ENCODE measurements at regions of chr7 and their contacts with region 1.

Region 1: DNA sequence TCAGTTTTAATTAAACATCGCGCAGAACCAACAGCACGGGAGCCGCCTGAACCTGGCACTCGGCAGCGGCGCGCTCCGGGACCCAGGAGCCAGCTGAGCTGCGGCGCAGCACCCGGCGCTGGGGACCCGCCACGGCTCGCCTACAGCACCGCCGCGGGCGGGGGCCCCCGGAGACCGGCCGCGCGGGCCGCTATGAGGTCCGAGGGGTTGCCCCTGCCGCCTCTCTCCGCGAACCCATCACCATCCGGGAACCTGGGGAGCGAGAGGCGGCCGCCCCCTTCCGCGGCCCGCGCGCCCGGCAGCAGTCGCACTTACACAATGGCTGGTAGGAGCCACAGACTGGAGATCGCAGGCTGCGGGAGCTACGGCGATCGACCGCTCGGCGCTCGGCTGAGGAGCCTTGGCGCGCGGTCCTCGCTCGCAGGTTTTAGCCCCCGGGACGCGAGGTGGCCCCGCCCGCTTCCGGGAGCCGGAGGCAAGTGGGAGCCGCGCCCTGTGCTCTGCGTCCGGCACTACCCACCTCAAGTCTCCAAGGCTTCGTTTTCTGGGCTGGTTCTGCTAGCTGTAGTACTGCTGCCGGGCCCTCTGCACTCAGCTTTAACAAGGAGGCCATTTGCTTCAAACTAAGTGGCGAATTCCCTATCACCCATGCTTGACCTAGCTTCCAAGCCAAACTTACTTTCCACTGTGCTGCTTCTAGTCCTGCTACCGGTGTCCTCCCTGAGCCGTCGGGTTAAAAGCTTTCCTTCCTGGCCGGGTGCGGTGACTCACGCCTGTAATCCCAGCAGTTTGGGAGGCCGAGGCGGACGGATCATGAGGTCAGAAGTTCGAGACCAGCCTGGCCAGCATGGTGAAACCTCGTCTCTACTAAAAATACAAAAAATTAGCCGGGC is at the start of gene TPK1:
- DNase-seq: peak; percentile 81 to 97 (median 90)
- ATAC-seq: peak; percentile 84
- H3K4me3 ChIP-seq: peak within 1 kb of the TSS; percentile 85
- H3K4me3 Mint-ChIP-seq: peak within 1 kb of the TSS; percentile 97
- H3K27ac ChIP-seq: peak within 1 kb of the TSS; percentile 87 to 88
- H3K27ac Mint-ChIP-seq: peak within 1 kb of the TSS; percentile 97
- H3K4me1 ChIP-seq: peaks cover 35% of the 10 kb centered on the region
- H3K4me1 Mint-ChIP-seq: peaks cover 45% of the 10 kb centered on the region
- H3K27me3 ChIP-seq: no peaks in the 10 kb centered on the region
- H3K27me3 Mint-ChIP-seq: no peaks in the 10 kb centered on the region
- CTCF ChIP-seq: no peak
- total RNA-seq, gene TPK1: 17.1 to 17.8 TPM

Region 2: DNA sequence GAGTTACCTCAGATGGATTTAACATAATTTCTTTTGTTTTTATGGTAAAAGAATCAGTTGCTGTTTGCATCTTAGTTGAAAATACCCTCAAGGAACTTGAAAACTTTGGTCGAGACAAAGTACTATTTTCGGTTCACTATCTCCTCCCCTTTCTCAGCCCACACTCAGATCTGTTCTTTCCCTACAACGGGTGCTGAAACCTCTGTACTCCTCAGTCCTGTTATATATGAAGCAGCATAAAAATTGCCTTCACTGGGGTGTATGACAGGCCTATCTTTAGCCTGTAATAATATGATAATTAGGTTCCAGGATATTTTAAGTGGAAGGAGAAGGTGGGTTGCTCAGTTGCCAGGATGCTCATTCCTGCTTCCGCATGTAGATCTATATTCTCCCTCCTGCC is 327.2 kb before region 1 on chr7:
- CTCF ChIA-PET with region 1: no interaction called
- POLR2A ChIA-PET with region 1: no interaction called
- intact Hi-C with region 1: no loop called
- DNase-seq: no peak
- ATAC-seq: no peak
- H3K4me3 ChIP-seq: no peak overlapping the region
- H3K4me3 Mint-ChIP-seq: no peak overlapping the region
- H3K27ac ChIP-seq: no peak overlapping the region
- H3K27ac Mint-ChIP-seq: no peak overlapping the region
- H3K4me1 ChIP-seq: no peaks in the 10 kb centered on the region
- H3K4me1 Mint-ChIP-seq: no peaks in the 10 kb centered on the region
- H3K27me3 ChIP-seq: no peaks in the 10 kb centered on the region
- H3K27me3 Mint-ChIP-seq: no peaks in the 10 kb centered on the region
- CTCF ChIP-seq: no peak

Region 3: DNA sequence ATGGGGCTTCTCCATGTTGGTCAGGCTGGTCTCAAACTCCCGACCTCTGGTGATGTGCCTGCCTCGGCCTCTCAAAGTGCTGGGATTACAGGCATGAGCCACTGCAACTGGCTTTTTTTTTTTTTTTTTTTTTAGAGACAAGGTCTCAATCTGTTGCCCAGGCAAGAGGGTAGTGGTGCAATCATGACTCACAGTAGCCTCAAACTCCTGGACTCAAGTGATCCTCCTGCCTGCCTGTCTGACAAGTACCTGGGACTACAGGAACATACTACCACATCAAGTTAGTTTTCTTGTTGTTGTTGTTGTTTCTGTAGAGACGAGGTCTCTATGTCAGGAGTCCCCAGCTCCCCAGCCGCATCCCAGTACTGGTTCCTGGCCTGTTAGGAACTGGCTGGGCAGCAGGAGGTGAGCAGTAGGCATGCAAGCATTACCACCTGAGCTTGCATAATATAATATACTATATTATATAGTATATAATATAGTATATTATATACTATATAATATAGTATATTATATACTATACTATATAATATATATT is 55.8 kb before region 1 on chr7:
- CTCF ChIA-PET with region 1: no interaction called
- POLR2A ChIA-PET with region 1: interaction called, 54 read pairs
- intact Hi-C with region 1: no loop called
- DNase-seq: no peak
- ATAC-seq: no peak
- H3K4me3 ChIP-seq: no peak overlapping the region
- H3K4me3 Mint-ChIP-seq: no peak overlapping the region
- H3K27ac ChIP-seq: no peak overlapping the region
- H3K27ac Mint-ChIP-seq: no peak overlapping the region
- H3K4me1 ChIP-seq: no peaks in the 10 kb centered on the region
- H3K4me1 Mint-ChIP-seq: peaks cover 39% of the 10 kb centered on the region
- H3K27me3 ChIP-seq: no peaks in the 10 kb centered on the region
- H3K27me3 Mint-ChIP-seq: no peaks in the 10 kb centered on the region
- CTCF ChIP-seq: no peak

Region 4: GRCh38 chr7:144796919-144797318 is 39.0 kb before region 1 on chr7:
- CTCF ChIA-PET with region 1: interaction called, 3 read pairs
- POLR2A ChIA-PET with region 1: interaction called, 16 read pairs
- intact Hi-C with region 1: no loop called
- DNase-seq: no peak
- ATAC-seq: no peak
- H3K4me3 ChIP-seq: no peak overlapping the region
- H3K4me3 Mint-ChIP-seq: no peak overlapping the region
- H3K27ac ChIP-seq: no peak overlapping the region
- H3K27ac Mint-ChIP-seq: no peak overlapping the region
- H3K4me1 ChIP-seq: no peaks in the 10 kb centered on the region
- H3K4me1 Mint-ChIP-seq: peaks cover 46% of the 10 kb centered on the region
- H3K27me3 ChIP-seq: no peaks in the 10 kb centered on the region
- H3K27me3 Mint-ChIP-seq: no peaks in the 10 kb centered on the region
- CTCF ChIP-seq: no peak

Region 5: DNA sequence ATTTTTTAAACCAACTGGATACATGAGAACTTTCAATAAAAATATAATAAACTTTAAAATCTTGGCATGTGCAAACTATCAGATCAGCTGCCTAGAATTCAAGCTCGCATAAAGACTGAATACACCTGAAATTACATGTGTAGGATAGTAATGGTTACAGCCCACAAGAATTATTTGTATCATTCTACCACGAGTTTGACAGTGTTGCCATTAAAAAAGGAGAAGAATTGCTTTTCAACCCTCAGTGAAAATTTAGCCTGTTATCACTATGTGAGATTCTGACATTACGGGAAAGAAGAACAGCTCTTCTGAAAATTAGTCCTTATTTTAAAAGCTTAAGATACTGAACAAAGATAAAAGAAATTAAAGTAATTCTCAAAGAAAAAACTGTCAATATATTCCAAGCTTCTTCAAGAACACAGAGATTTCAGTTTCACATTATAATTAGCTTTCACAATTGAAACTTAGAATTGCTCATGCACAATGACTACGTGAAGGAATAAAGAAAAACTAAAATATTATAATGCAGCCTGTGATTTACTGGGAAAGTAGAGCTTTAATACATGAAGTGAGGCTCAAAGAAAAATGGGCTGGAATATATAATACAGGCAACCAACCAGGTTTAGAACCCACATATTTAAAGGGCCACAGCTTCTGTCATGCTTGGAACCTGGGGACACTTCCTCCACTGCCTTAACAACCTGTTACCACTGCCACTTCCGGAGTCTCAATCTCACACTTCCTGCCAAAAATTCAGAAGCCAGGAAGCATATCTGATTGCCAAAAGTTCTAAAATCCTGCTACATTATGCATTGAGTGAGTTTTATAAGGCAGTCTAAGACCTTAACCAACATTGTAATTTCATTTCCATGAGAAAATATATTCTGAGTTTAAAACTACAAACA is 23.3 kb before region 1 on chr7:
- CTCF ChIA-PET with region 1: interaction called, 5 read pairs
- POLR2A ChIA-PET with region 1: interaction called, 302 read pairs
- intact Hi-C with region 1: loop called (anchors 1 to 5 kb)
- DNase-seq: peak in 12 of 14 experiments; percentile 14 to 87 (median 40)
- ATAC-seq: peak; percentile 98
- H3K4me3 ChIP-seq: peak overlapping the region; percentile 21
- H3K4me3 Mint-ChIP-seq: peak overlapping the region; percentile 84
- H3K27ac ChIP-seq: peak overlapping the region; percentile 54 to 72
- H3K27ac Mint-ChIP-seq: peak overlapping the region; percentile 88
- H3K4me1 ChIP-seq: peaks cover 8% of the 10 kb centered on the region
- H3K4me1 Mint-ChIP-seq: peaks cover 85% of the 10 kb centered on the region
- H3K27me3 ChIP-seq: no peaks in the 10 kb centered on the region
- H3K27me3 Mint-ChIP-seq: no peaks in the 10 kb centered on the region
- CTCF ChIP-seq: no peak

Region 6: GRCh38 chr7:144854839-144855424 is 19.0 kb after region 1 on chr7:
- CTCF ChIA-PET with region 1: interaction called, 4 read pairs
- POLR2A ChIA-PET with region 1: interaction called, 25 read pairs
- intact Hi-C with region 1: no loop called
- DNase-seq: peak in 2 of 14 experiments; percentile 20 to 22
- ATAC-seq: no peak
- H3K4me3 ChIP-seq: no peak overlapping the region
- H3K4me3 Mint-ChIP-seq: no peak overlapping the region
- H3K27ac ChIP-seq: no peak overlapping the region
- H3K27ac Mint-ChIP-seq: no peak overlapping the region
- H3K4me1 ChIP-seq: no peaks in the 10 kb centered on the region
- H3K4me1 Mint-ChIP-seq: peaks cover 4% of the 10 kb centered on the region
- H3K27me3 ChIP-seq: no peaks in the 10 kb centered on the region
- H3K27me3 Mint-ChIP-seq: no peaks in the 10 kb centered on the region
- CTCF ChIP-seq: peak; percentile 71

Region 7: GRCh38 chr7:146397141-146397540 is 1561.2 kb after region 1 on chr7:
- CTCF ChIA-PET with region 1: no interaction called
- POLR2A ChIA-PET with region 1: no interaction called
- intact Hi-C with region 1: no loop called
- DNase-seq: no peak
- ATAC-seq: no peak
- H3K4me3 ChIP-seq: no peak overlapping the region
- H3K4me3 Mint-ChIP-seq: no peak overlapping the region
- H3K27ac ChIP-seq: no peak overlapping the region
- H3K27ac Mint-ChIP-seq: no peak overlapping the region
- H3K4me1 ChIP-seq: no peaks in the 10 kb centered on the region
- H3K4me1 Mint-ChIP-seq: no peaks in the 10 kb centered on the region
- H3K27me3 ChIP-seq: no peaks in the 10 kb centered on the region
- H3K27me3 Mint-ChIP-seq: no peaks in the 10 kb centered on the region
- CTCF ChIP-seq: no peak

Measured in CD4-positive, alpha-beta T cell (primary cell).